GM10248 (cell line): ENCODE measurements at regions of chr7 and their contacts with region 1.

Region 1: DNA sequence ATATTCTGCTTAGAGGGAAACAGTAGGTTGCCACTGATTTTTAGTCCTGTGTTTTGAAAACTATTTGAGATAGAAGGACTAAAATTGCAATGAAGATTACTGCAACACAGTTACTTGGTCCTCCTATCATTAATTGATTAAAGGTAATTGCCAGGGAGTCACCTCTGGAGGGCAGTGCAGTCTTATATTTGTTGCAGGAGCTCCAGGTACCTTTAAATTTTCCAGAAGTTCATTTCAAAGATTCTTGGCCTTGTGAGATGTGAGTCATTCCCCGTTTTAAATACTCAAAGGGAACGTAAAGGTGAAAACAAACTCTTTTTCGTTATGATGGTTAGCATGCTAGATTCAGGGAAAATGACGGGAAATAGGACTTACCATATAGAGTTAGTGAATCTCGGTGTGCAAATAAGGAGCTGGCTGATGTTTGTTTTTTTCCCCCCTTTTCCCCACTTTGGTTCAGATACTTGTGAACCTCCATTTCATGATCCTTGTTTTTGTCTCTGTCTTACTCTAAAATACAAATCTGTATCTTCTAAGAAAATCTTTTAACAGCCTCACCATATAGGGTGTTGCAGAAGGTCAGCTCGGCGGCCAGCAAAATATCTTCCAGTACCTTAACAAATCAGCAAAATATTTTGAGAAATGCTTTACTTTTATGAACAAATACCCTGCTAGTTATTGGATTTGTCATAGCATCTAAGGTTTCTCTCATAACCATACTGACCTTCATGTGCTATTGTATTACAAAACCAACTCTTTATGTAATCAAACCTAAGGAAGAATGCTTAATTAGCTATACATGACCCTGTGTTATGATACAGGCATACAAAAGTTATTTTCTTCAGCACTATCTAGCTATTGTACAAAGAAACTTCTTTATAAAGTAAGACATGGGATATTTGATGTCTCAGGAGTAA is 143.0 kb upstream of the HDAC9 start:
- DNase-seq: peak; percentile 15
- CTCF ChIP-seq: peak; percentile 56

Region 2: DNA sequence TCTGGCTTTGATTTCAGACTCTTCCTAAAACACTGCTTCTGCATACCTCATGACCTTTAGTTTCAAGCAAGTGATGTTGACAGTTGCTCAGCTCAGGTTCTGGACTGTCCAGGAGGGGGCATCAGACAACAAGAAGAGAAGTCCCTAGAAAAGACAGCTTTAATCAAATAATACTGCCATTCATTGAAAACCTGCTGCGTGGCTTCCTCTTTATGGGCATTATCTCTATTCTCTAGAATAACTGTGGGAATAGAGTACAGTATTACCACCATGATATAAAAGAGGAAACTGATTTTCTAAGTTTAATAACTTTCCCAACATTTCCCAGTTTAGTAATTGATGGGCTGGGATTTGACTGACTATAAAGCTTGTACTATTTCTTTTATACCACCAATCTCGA is 582.7 kb before region 1 on chr7:
- CTCF ChIA-PET with region 1: interaction called, 11 read pairs
- POLR2A ChIA-PET with region 1: no interaction called
- DNase-seq: peak; percentile 45
- CTCF ChIP-seq: peak; percentile 86

Region 3: DNA sequence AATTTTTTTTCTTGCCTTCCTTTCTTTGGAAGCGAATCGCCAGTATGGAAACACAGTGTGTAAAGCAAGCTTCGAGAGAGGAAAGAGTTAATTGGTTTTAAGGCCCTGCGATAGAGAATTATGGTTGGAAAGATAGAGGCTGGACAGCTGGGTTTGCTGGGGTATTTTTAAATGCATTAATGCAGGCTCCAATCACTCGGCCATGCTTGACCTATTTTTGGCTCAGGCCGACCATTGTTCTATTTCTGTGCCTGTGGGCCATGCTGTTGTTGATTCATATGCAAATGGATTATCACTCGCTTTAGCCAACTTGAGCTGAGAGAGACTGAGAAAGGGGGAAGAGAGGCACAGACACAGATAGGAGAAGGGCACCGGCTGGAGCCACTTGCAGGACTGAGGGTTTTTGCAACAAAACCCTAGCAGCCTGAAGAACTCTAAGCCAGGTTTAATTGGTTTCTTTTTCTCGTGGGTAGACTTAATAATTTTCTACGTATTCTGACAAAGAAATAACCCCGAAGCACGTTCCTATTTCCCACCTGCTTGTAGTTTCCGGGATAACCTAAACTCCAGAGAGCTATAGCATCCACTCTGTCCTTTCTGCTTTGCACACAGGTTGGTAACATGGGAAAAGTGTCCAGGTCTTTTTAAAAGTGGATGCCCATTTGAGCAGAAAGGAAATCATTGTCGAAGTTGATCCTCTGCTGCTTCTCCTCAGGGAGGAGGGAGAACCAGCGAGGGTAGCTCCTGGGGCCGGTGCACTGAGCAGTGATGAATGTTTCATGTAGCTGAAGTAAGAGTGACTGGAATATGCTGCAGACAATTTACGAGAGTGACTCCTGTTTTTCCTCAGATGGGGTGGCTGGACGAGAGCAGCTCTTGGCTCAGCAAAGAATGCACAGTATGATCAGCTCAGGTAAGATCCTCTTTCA is 143.1 kb after region 1 on chr7 and contains the start of gene HDAC9:
- CTCF ChIA-PET with region 1: interaction called, 18 read pairs
- POLR2A ChIA-PET with region 1: no interaction called
- DNase-seq: peak; percentile 31
- CTCF ChIP-seq: no peak

Region 4: DNA sequence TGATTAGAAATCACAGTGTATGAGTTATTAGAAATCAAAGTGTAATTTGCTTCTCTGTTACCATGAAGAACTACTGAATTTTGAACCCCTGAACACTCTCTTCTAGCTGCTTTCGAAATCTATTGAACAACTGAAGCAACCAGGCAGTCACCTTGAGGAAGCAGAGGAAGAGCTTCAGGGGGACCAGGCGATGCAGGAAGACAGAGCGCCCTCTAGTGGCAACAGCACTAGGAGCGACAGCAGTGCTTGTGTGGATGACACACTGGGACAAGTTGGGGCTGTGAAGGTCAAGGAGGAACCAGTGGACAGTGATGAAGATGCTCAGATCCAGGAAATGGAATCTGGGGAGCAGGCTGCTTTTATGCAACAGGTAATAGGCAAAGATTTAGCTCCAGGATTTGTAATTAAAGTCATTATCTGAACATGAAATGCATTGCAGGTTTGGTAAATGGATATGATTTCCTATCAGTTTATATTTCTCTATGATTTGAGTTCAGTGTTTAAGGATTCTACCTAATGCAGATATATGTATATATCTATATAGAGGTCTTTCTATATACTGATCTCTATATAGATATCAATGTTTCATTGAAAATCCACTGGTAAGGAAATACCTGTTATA is 313.6 kb after region 1 on chr7:
- CTCF ChIA-PET with region 1: interaction called, 42 read pairs
- POLR2A ChIA-PET with region 1: no interaction called
- DNase-seq: peak; percentile 48
- CTCF ChIP-seq: peak; percentile 96

Region 5: GRCh38 chr7:19665399-19666008 is 1312.9 kb after region 1 on chr7:
- CTCF ChIA-PET with region 1: interaction called, 14 read pairs
- POLR2A ChIA-PET with region 1: no interaction called
- DNase-seq: peak; percentile 21
- CTCF ChIP-seq: peak; percentile 24